ENCODE measurements at regions of chr1 and their contacts with region 1.

Region 1: GRCh38 chr1:171081314-171081753 is 9.4 kb upstream of the FMO3 start:
- DNase-seq: no peak
- ATAC-seq: no peak
- H3K4me3 ChIP-seq: no peak overlapping the region
- H3K27ac ChIP-seq: no peak overlapping the region
- H3K4me1 ChIP-seq: no peaks in the 10 kb centered on the region
- H3K27me3 ChIP-seq: no peaks in the 10 kb centered on the region
- CTCF ChIP-seq: peak; percentile 42; the same call in 1 of the 2 replicates

Region 2: GRCh38 chr1:171188388-171189266 is 107.3 kb after region 1 on chr1:
- CTCF ChIA-PET with region 1: no interaction called
- POLR2A ChIA-PET with region 1: no interaction called
- in situ Hi-C with region 1: no loop called
- intact Hi-C with region 1: loop called (anchors 5 kb)
- DNase-seq: peak; percentile 32
- ATAC-seq: peak; percentile 80; the same call in 1 of the 2 replicates
- H3K4me3 ChIP-seq: no peak overlapping the region
- H3K27ac ChIP-seq: no peak overlapping the region
- H3K4me1 ChIP-seq: no peaks in the 10 kb centered on the region
- H3K27me3 ChIP-seq: no peaks in the 10 kb centered on the region; the same call in 1 of the 2 replicates
- CTCF ChIP-seq: peak; percentile 82